PC-9 (cell line): ENCODE measurements at regions of chr3 and their contacts with region 1.

Region 1: GRCh38 chr3:43621656-43622432 is at the start of gene ANO10:
- DNase-seq: peak; percentile 96 to 98
- H3K4me3 ChIP-seq: peak within 1 kb of the TSS; percentile 87
- H3K27ac ChIP-seq: peak within 1 kb of the TSS; percentile 73
- H3K4me1 ChIP-seq: peaks cover 10% of the 10 kb centered on the region
- H3K27me3 ChIP-seq: no peaks in the 10 kb centered on the region
- CTCF ChIP-seq: no peak
- total RNA-seq, gene ANO10: 30.7 and 32.6 TPM in 2 replicates

Region 2: GRCh38 chr3:43659250-43659880 is 37.5 kb after region 1 on chr3:
- CTCF ChIA-PET with region 1: no interaction called
- POLR2A ChIA-PET with region 1: interaction called, 25 read pairs
- intact Hi-C with region 1: no loop called
- DNase-seq: no peak
- H3K4me3 ChIP-seq: no peak overlapping the region
- H3K27ac ChIP-seq: no peak overlapping the region
- H3K4me1 ChIP-seq: no peaks in the 10 kb centered on the region
- H3K27me3 ChIP-seq: no peaks in the 10 kb centered on the region
- CTCF ChIP-seq: no peak

Region 3: GRCh38 chr3:43753781-43754201 is 131.9 kb after region 1 on chr3:
- CTCF ChIA-PET with region 1: no interaction called
- POLR2A ChIA-PET with region 1: interaction called, 10 read pairs
- intact Hi-C with region 1: no loop called
- DNase-seq: peak in 1 of 2 experiments; percentile 95
- H3K4me3 ChIP-seq: no peak overlapping the region
- H3K27ac ChIP-seq: peak overlapping the region; percentile 59
- H3K4me1 ChIP-seq: peaks cover 44% of the 10 kb centered on the region
- H3K27me3 ChIP-seq: no peaks in the 10 kb centered on the region
- CTCF ChIP-seq: no peak